CD8-positive, alpha-beta memory T cell (primary cell): ENCODE measurements at regions of chr15 and their contacts with region 1.

Region 1: GRCh38 chr15:43800286-43801141 is at the start of gene HYPK:
- DNase-seq: peak; percentile 88 to 94 (median 89)
- H3K4me3 ChIP-seq: peak within 1 kb of the TSS; percentile 88
- H3K4me3 Mint-ChIP-seq: peak within 1 kb of the TSS; percentile 94 to 100 (median 97)
- H3K27ac ChIP-seq: peak within 1 kb of the TSS; percentile 89
- H3K27ac Mint-ChIP-seq: peak within 1 kb of the TSS; percentile 86 to 100 (median 98)
- H3K4me1 ChIP-seq: peaks cover 20% of the 10 kb centered on the region
- H3K4me1 Mint-ChIP-seq: peaks cover 37 to 58% (median 51%) of the 10 kb centered on the region in 3 donors
- H3K27me3 ChIP-seq: no peaks in the 10 kb centered on the region
- H3K27me3 Mint-ChIP-seq: no peaks in the 10 kb centered on the region
- total RNA-seq, gene HYPK: 28.5 to 32.7 TPM

Region 2: GRCh38 chr15:43824302-43825246 is 24.1 kb after region 1 on chr15 and contains the start of gene MFAP1:
- CTCF ChIA-PET with region 1: interaction called, 6 read pairs
- POLR2A ChIA-PET with region 1: interaction called, 16 read pairs
- DNase-seq: peak; percentile 86 to 95 (median 89)
- H3K4me3 ChIP-seq: peak within 1 kb of the TSS; percentile 96
- H3K4me3 Mint-ChIP-seq: peak within 1 kb of the TSS; percentile 94 to 100 (median 99)
- H3K27ac ChIP-seq: peak within 1 kb of the TSS; percentile 97
- H3K27ac Mint-ChIP-seq: peak within 1 kb of the TSS; percentile 93 to 99 (median 99)
- H3K4me1 ChIP-seq: peaks cover 55% of the 10 kb centered on the region
- H3K4me1 Mint-ChIP-seq: peaks cover 49 to 78% (median 63%) of the 10 kb centered on the region in 3 donors
- H3K27me3 ChIP-seq: no peaks in the 10 kb centered on the region
- H3K27me3 Mint-ChIP-seq: no peaks in the 10 kb centered on the region
- total RNA-seq, gene MFAP1: 49.8 to 50.1 TPM